Lower leg skin (tissue), 4 donors: ENCODE measurements at regions of chr19 and their contacts with region 1.

Region 1: DNA sequence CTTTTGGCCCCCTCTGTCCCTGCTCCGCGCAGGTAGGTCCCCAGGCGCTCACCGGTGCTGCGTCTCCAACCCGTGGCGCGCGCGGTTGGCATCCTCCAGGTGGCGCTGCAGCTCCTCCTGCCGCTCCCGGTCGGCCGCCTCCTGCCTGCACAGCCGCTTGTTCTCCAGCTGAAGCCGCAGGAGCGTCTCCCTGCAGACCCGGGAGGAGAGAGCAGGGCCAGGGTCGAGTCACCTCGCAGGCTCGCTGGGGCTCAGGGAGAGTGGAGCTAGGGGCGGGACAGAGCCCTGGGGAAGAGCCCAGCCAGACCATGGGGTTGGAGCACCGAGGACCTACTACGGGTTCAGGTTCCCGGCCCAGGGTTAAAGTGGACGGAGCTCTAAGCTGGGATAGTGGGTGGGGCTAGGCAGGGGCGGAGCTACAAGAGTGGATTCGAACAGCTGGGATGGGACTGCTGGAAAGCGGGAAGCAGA is 9.3 kb downstream of the HOOK2 start:
- DNase-seq: peak in 1 of 2 donors; percentile 97
- H3K4me3 ChIP-seq: no peak overlapping the region
- CTCF ChIP-seq: peak in 1 of 3 donors; percentile 33
- POLR2A ChIP-seq: no peak

Region 2: GRCh38 chr19:12736995-12737834 is 28.9 kb before region 1 on chr19 and contains the start of gene GET3:
- intact Hi-C with region 1: no loop called
- DNase-seq: peak; percentile 97
- H3K4me3 ChIP-seq: peak within 1 kb of the TSS; percentile 67
- CTCF ChIP-seq: no peak
- POLR2A ChIP-seq: no peak
- total RNA-seq, gene GET3: 43.2 to 63.2 (median 53.4) TPM

Region 3: DNA sequence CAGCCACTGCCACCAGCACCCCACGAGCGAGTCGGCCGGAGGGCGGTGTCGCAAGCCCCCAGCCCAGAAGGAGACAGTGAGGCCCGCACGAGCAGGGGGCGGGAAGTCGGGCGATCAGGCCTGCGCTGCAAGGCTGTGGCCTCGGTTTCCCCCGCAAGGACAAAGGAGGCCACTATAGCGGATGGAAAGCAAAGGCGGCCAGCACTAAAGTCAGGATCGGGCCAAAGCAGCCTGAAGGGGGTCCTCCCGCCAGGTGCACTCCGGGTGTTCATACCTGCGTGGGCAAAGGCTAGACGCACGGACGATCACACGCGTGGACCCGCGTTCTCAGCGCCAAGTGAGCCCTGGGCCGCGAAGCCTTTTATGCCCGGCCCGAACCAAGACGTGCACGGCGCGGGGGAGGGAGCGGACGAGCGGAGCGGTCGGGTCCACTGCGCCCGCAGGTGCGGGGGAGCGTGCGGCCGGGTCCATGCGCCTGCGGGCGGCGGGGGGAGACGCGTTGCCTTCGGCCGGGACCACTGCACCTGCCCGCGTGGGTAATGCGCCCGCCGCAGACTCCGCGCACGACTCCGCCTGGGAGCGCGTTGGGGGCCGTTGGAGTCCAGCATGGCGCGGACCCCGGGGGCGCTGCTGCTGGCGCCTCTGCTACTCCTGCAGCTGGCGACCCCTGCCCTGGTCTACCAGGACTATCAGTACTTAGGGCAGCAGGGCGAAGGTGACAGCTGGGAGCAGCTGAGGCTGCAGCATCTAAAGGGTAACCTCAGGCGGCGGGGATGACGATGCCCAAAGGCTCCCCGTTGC is 35.6 kb after region 1 on chr19 and contains the starts of genes PRDX2 and THSD8:
- intact Hi-C with region 1: loop called (anchors 5 kb)
- DNase-seq: peak; percentile 43 to 95
- H3K4me3 ChIP-seq: peak within 1 kb of the TSS; percentile 60
- CTCF ChIP-seq: peak in 1 of 3 donors; percentile 10
- POLR2A ChIP-seq: no peak
- total RNA-seq, gene PRDX2: 266 to 459 (median 327) TPM
- total RNA-seq, gene THSD8: 1.6 TPM in 1 of 4 donors, not detected in the others

Region 4: GRCh38 chr19:12840091-12841079 is 74.3 kb after region 1 on chr19:
- intact Hi-C with region 1: loop called (anchors 5 kb)
- DNase-seq: peak in 1 of 2 donors; percentile 46
- H3K4me3 ChIP-seq: peak overlapping the region; percentile 16
- CTCF ChIP-seq: no peak
- POLR2A ChIP-seq: no peak